Aorta (tissue), 5 donors: ENCODE measurements at regions of chr1 and their contacts with region 1.

Region 1: DNA sequence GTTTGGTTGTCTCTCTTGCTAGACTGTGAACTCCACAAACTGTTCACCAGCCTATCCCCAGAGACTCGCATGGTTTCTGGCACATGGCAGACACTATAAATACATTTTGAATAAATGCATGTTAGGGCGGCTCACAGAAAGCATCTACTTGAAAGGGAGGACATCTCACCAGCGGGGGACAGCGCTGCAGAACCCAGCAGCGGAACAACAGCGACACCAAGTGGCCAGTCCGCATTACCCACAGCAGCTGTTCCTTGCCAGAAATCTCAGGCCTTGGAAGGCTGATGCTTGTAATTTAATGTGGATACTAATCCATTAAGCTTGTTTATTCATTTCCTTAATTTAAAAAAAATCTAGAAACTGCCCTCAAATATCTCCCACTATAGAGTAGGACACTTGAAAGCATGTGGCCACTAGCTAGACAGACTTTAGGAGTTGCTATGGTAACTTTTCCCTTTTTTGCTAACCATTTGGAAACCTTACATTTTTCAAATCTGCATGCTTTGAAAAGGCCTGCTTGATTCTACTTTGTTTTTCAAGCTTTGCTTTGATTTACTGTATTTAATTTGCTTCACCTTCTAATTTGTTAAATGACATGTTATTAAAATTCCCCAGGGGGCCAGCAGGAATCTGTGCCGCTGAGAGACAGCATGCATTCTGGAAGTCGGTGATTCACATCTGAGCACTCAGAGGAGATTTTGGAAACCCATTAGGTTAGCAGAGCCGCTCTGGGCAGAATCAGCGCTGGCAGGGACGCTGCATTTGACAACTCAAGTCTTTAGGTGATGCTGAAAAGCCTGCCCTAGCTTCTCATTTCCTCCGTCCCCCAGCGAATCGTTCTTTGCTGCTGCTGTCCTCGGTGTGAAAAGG is 63.5 kb upstream of the SSX2IP start:
- DNase-seq: peak; percentile 85 to 90
- ATAC-seq: peak; percentile 84
- H3K4me3 ChIP-seq: no peak overlapping the region
- H3K27ac ChIP-seq: no peak overlapping the region
- H3K4me1 ChIP-seq: no peaks in the 10 kb centered on the region
- H3K27me3 ChIP-seq: no peaks in the 10 kb centered on the region

Region 2: GRCh38 chr1:84620720-84621313 is 132.9 kb before region 1 on chr1:
- intact Hi-C with region 1: loop called (anchors 1 to 5 kb)
- DNase-seq: peak; percentile 85 to 92
- ATAC-seq: peak; percentile 95
- H3K4me3 ChIP-seq: peak overlapping the region; percentile 2 to 79
- H3K27ac ChIP-seq: no peak overlapping the region
- H3K4me1 ChIP-seq: no peaks in the 10 kb centered on the region
- H3K27me3 ChIP-seq: no peaks in the 10 kb centered on the region

Region 3: GRCh38 chr1:84653130-84653677 is 100.5 kb before region 1 on chr1:
- intact Hi-C with region 1: no loop called
- DNase-seq: no peak
- ATAC-seq: no peak
- H3K4me3 ChIP-seq: no peak overlapping the region
- H3K27ac ChIP-seq: no peak overlapping the region
- H3K4me1 ChIP-seq: no peaks in the 10 kb centered on the region
- H3K27me3 ChIP-seq: no peaks in the 10 kb centered on the region

Region 4: DNA sequence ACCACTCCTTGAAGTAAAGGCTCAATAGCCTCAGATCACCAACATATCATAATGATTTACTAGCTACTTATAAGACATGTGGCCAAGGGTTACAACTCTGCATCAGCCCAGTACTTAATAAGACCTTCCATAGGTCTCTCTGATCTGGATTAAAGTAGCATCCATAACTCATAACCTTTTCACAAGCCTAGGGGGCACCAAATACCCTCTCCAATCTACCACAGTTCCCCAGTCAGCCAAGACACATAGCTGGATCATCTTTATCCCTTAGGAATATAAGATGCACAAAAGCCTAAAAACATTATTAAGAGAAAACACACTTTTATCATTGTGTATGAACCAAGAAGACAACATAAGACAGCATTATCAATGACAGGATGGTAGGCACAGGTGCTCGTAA is 85.6 kb before region 1 on chr1:
- intact Hi-C with region 1: loop called (anchors 2 kb)
- DNase-seq: no peak
- ATAC-seq: no peak
- H3K4me3 ChIP-seq: no peak overlapping the region
- H3K27ac ChIP-seq: no peak overlapping the region
- H3K4me1 ChIP-seq: no peaks in the 10 kb centered on the region
- H3K27me3 ChIP-seq: no peaks in the 10 kb centered on the region

Region 5: GRCh38 chr1:84712276-84712874 is 41.4 kb before region 1 on chr1:
- intact Hi-C with region 1: no loop called
- DNase-seq: no peak
- ATAC-seq: no peak
- H3K4me3 ChIP-seq: no peak overlapping the region
- H3K27ac ChIP-seq: no peak overlapping the region
- H3K4me1 ChIP-seq: peaks cover 0 to 2% of the 10 kb centered on the region in 2 donors
- H3K27me3 ChIP-seq: no peaks in the 10 kb centered on the region

Region 6: GRCh38 chr1:85307987-85308832 is 554.5 kb after region 1 on chr1:
- intact Hi-C with region 1: no loop called
- DNase-seq: peak; percentile 90 to 97
- ATAC-seq: peak; percentile 96
- H3K4me3 ChIP-seq: no peak overlapping the region
- H3K27ac ChIP-seq: no peak overlapping the region
- H3K4me1 ChIP-seq: peaks cover 0 to 1% of the 10 kb centered on the region in 2 donors
- H3K27me3 ChIP-seq: no peaks in the 10 kb centered on the region